ENCODE measurements at regions of chr11 and their contacts with region 1.

Region 1: GRCh38 chr11:33857933-33858371 is 33.9 kb downstream of the LMO2 start:
- DNase-seq: peak; percentile 84
- ATAC-seq: peak; percentile 94
- H3K4me3 ChIP-seq: no peak overlapping the region
- H3K27ac ChIP-seq: no peak overlapping the region
- H3K4me1 ChIP-seq: no peaks in the 10 kb centered on the region
- H3K27me3 ChIP-seq: no peaks in the 10 kb centered on the region
- CTCF ChIP-seq: peak; percentile 91

Region 2: DNA sequence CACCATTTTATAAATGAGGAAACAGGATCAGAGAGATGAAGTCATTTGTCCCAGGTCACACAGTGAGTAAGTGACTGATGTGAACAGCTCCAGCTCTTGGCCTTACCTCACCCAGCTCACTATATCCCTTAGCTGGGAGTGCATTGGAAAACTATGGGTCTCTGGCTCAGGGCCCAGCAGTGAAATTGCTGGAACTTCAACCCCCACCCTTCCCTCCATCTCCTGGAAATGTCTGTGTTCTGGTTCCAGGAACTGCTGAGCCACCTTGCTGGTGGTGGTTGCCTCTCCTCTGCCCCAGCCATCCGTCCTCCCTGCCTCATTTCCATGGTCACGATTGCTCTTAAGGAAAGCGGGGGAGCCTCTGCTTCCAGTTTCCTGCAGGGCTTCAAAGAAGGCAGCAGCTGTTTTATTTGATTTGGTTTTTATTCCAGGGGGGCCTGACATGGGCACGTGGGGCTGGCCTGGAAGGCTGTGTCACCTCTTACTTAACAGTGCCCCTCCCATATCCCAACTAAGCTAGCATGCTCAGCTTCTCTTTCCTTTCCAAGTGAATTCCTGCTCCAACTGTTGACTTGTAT is 650.5 kb before region 1 on chr11:
- intact Hi-C with region 1: no loop called
- DNase-seq: no peak
- ATAC-seq: peak; percentile 50
- H3K4me3 ChIP-seq: no peak overlapping the region
- H3K27ac ChIP-seq: no peak overlapping the region
- H3K4me1 ChIP-seq: no peaks in the 10 kb centered on the region
- H3K27me3 ChIP-seq: no peaks in the 10 kb centered on the region
- CTCF ChIP-seq: no peak

Region 3: DNA sequence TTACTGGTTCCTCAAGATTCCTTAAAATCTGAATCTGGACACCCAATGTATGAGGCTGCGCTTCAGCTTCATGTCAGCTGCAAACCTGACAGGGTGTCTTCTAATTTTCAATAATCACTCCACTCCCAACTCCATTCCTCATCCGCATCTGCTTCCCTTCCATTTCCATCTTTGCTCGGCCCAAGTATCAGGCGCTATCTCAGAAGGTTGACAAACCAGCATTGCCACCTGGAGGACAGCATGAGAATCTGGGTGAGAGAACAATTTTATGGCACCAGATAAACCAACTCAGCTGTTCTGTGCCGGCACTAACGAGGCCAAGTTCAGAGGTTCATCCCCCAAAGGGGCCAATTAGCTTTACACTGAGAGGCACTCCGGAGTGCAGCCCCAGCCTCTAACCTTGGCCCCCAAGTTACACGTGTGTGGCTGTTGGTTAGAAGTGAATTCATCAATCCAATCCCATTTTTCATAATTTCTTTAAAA is 113.1 kb after region 1 on chr11:
- intact Hi-C with region 1: loop called (anchors 2 kb)
- DNase-seq: no peak
- ATAC-seq: peak; percentile 91
- H3K4me3 ChIP-seq: no peak overlapping the region
- H3K27ac ChIP-seq: no peak overlapping the region
- H3K4me1 ChIP-seq: no peaks in the 10 kb centered on the region
- H3K27me3 ChIP-seq: no peaks in the 10 kb centered on the region
- CTCF ChIP-seq: peak; percentile 68

Measured in upper lobe of right lung (tissue), 1 donor.